Testis (tissue), 5 donors: ENCODE measurements at regions of chr2 and their contacts with region 1.

Region 1: DNA sequence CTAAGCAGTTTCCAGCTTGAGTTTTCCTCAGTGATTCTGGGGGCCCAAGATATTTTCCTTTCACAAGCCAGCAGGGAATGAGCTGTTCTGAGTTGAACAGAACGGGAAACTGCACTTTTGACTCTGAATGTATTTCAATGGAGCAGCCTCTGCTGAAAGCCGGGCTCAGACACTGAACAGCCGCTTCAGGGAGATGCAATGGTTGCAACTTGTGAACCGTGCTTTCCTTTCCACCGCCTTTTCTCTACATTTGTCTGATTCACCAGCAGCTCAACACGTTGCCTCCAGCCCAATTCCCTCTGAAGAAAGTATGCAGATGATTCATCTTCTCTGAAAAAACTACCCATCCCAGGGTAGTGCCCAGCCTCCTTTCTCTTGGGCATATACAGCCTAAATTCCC is 119.3 kb upstream of the PKDCC start:
- DNase-seq: no peak
- H3K4me3 ChIP-seq: no peak overlapping the region
- H3K27ac ChIP-seq: peak overlapping the region in 1 of 2 donors; percentile 78
- H3K4me1 ChIP-seq: peaks cover 64% of the 10 kb centered on the region
- H3K27me3 ChIP-seq: no peaks in the 10 kb centered on the region
- CTCF ChIP-seq: no peak
- POLR2A ChIP-seq: no peak

Region 2: DNA sequence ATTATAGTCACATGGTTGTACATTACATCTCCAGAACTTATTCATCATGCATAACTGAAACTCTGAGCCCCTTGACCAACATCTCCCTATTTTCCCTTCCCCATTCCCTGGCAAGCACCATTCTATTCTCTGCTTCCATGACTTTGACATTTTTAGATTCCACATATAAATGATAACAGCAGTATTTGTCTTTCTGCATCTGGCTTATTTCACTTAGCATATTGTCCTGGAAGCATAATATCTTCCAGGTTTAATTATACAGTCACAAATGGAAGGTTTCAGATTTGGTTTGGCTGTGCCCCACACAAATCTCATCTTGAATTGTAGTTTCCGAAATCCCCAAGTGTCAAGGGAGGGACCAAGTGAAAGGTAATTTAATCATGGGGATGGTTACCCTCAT is 507.7 kb before region 1 on chr2:
- intact Hi-C with region 1: no loop called
- DNase-seq: no peak
- H3K4me3 ChIP-seq: no peak overlapping the region
- H3K27ac ChIP-seq: no peak overlapping the region
- H3K4me1 ChIP-seq: no peaks in the 10 kb centered on the region
- H3K27me3 ChIP-seq: no peaks in the 10 kb centered on the region
- CTCF ChIP-seq: no peak
- POLR2A ChIP-seq: no peak

Region 3: GRCh38 chr2:41840702-41841551 is 87.6 kb before region 1 on chr2:
- intact Hi-C with region 1: no loop called
- DNase-seq: peak; percentile 99
- H3K4me3 ChIP-seq: peak overlapping the region; percentile 58 to 89
- H3K27ac ChIP-seq: peak overlapping the region; percentile 63 to 81
- H3K4me1 ChIP-seq: peaks cover 4% of the 10 kb centered on the region
- H3K27me3 ChIP-seq: no peaks in the 10 kb centered on the region
- CTCF ChIP-seq: peak; percentile 98 to 100 (median 98)
- POLR2A ChIP-seq: no peak

Region 4: GRCh38 chr2:42054714-42055430 is 126.3 kb after region 1 on chr2:
- intact Hi-C with region 1: loop called (anchors 5 kb)
- DNase-seq: no peak
- H3K4me3 ChIP-seq: no peak overlapping the region
- H3K27ac ChIP-seq: peak overlapping the region; percentile 87 to 94
- H3K4me1 ChIP-seq: peaks cover 62% of the 10 kb centered on the region
- H3K27me3 ChIP-seq: no peaks in the 10 kb centered on the region
- CTCF ChIP-seq: no peak
- POLR2A ChIP-seq: no peak